PC-3 (cell line): ENCODE measurements at regions of chr4 and their contacts with region 1.

Region 1: GRCh38 chr4:159298502-159298901 is 195.6 kb downstream of the RAPGEF2 start:
- DNase-seq: no peak
- ATAC-seq: peak; percentile 29
- H3K4me3 ChIP-seq: no peak overlapping the region
- H3K27ac ChIP-seq: no peak overlapping the region
- H3K4me1 ChIP-seq: peaks cover 43% of the 10 kb centered on the region
- H3K27me3 ChIP-seq: no peaks in the 10 kb centered on the region
- CTCF ChIP-seq: no peak

Region 2: DNA sequence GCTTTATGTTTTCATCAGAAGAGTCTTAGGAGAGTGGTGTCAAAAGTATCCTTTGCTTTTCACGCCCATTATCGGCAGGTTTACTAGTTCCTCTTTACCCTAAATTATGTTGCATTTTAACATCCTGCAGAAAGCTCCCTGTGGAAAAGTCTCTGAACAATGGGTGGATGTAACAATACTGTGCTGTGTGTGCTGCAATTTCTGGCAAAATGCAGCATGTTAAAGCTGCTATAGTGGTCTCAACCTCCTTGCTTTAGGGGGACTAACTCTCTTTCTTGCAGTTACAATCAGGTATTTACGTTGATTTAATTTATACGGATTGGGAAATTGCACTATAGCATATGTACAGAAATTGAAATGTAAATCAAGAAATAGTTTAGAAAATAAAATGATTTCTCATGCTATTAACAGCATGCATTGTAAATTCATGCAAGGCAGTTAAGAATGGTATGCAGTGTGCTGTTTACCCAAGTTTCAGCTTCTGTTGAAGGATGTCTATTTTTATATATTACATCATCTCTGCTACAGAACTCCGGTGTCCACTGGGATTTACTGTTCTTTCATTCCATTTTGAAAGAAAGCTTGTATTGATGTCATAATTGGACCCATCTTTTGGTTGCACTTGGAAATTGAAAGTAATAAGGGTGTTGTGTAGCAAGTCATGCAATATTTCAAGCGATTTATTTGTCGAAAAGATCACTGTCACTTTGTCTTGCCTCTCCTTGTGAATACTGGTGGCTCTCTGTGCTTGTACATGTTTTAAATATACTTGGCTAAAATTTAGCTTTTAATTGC is 49.9 kb before region 1 on chr4:
- CTCF ChIA-PET with region 1: no interaction called
- POLR2A ChIA-PET with region 1: no interaction called
- intact Hi-C with region 1: loop called (anchors 10 kb)
- DNase-seq: no peak
- ATAC-seq: peak; percentile 64
- H3K4me3 ChIP-seq: no peak overlapping the region
- H3K27ac ChIP-seq: no peak overlapping the region
- H3K4me1 ChIP-seq: no peaks in the 10 kb centered on the region
- H3K27me3 ChIP-seq: no peaks in the 10 kb centered on the region
- CTCF ChIP-seq: no peak

Region 3: GRCh38 chr4:159384632-159385031 is 86.1 kb after region 1 on chr4:
- CTCF ChIA-PET with region 1: no interaction called
- POLR2A ChIA-PET with region 1: no interaction called
- intact Hi-C with region 1: no loop called
- DNase-seq: no peak
- ATAC-seq: no peak
- H3K4me3 ChIP-seq: no peak overlapping the region
- H3K27ac ChIP-seq: no peak overlapping the region
- H3K4me1 ChIP-seq: no peaks in the 10 kb centered on the region
- H3K27me3 ChIP-seq: no peaks in the 10 kb centered on the region
- CTCF ChIP-seq: no peak; the same call in 1 of the 2 replicates